CD14-positive monocyte (primary cell): ENCODE measurements at regions of chr4 and their contacts with region 1.

Region 1: GRCh38 chr4:158729716-158730559 is 6.7 kb upstream of the PPID start:
- DNase-seq: peak; percentile 51 to 71 (median 66)
- H3K4me3 ChIP-seq: no peak overlapping the region
- H3K4me3 Mint-ChIP-seq: no peak overlapping the region
- H3K27ac ChIP-seq: no peak overlapping the region
- H3K27ac Mint-ChIP-seq: no peak overlapping the region
- H3K4me1 ChIP-seq: no peaks in the 10 kb centered on the region
- H3K4me1 Mint-ChIP-seq: peaks cover 2% of the 10 kb centered on the region
- H3K27me3 ChIP-seq: peaks cover 0 to 4% of the 10 kb centered on the region in 2 donors
- H3K27me3 Mint-ChIP-seq: peaks cover under 1 to 8% (median 4%) of the 10 kb centered on the region in 3 donors
- CTCF ChIP-seq: peak; percentile 88

Region 2: GRCh38 chr4:158295053-158295452 is 434.9 kb before region 1 on chr4:
- intact Hi-C with region 1: no loop called
- DNase-seq: no peak
- H3K4me3 ChIP-seq: no peak overlapping the region
- H3K4me3 Mint-ChIP-seq: no peak overlapping the region
- H3K27ac ChIP-seq: no peak overlapping the region
- H3K27ac Mint-ChIP-seq: no peak overlapping the region
- H3K4me1 ChIP-seq: no peaks in the 10 kb centered on the region
- H3K4me1 Mint-ChIP-seq: no peaks in the 10 kb centered on the region
- H3K27me3 ChIP-seq: no peaks in the 10 kb centered on the region
- H3K27me3 Mint-ChIP-seq: peaks cover 0 to 4% (median 3%) of the 10 kb centered on the region in 3 donors
- CTCF ChIP-seq: no peak

Region 3: GRCh38 chr4:158845311-158846041 is 115.5 kb after region 1 on chr4:
- intact Hi-C with region 1: loop called (anchors 5 kb)
- DNase-seq: no peak
- H3K4me3 ChIP-seq: no peak overlapping the region
- H3K4me3 Mint-ChIP-seq: no peak overlapping the region
- H3K27ac ChIP-seq: no peak overlapping the region
- H3K27ac Mint-ChIP-seq: no peak overlapping the region
- H3K4me1 ChIP-seq: no peaks in the 10 kb centered on the region
- H3K4me1 Mint-ChIP-seq: peaks cover 3% of the 10 kb centered on the region
- H3K27me3 ChIP-seq: no peaks in the 10 kb centered on the region
- H3K27me3 Mint-ChIP-seq: no peaks in the 10 kb centered on the region
- CTCF ChIP-seq: no peak

Region 4: DNA sequence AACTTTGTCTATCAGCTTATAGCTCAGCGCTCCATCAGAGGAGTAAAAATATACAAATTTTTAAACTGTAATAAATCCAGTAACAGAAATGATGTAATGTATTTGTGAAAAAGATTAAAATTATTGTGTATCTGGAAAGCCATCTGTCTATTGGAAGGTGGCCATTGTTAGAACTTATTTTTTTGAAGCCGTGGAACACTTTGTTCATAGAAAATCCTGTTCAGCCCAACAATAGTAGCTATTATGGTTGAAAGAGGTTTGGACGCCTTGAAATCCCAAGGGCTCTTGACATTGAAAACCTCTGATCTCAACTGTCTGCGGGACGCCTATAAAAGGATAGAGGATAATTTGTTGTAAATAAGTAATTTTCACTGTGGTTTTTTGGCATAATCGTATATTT is 471.2 kb after region 1 on chr4:
- intact Hi-C with region 1: loop called (anchors 5 to 10 kb)
- DNase-seq: no peak
- H3K4me3 ChIP-seq: no peak overlapping the region
- H3K4me3 Mint-ChIP-seq: no peak overlapping the region
- H3K27ac ChIP-seq: no peak overlapping the region
- H3K27ac Mint-ChIP-seq: no peak overlapping the region
- H3K4me1 ChIP-seq: peaks cover 7 to 8% of the 10 kb centered on the region in 2 donors
- H3K4me1 Mint-ChIP-seq: peaks cover 35% of the 10 kb centered on the region
- H3K27me3 ChIP-seq: no peaks in the 10 kb centered on the region
- H3K27me3 Mint-ChIP-seq: peaks cover 0 to 2% (median 0%) of the 10 kb centered on the region in 3 donors
- CTCF ChIP-seq: no peak